Common myeloid progenitor, CD34-positive (primary cell): ENCODE measurements at regions of chr5 and their contacts with region 1.

Region 1: GRCh38 chr5:151115274-151115905 is 34.6 kb upstream of the TNIP1 start:
- DNase-seq: peak; percentile 51 to 75 (median 70)
- H3K4me3 ChIP-seq: no peak overlapping the region
- H3K27ac ChIP-seq: no peak overlapping the region
- H3K4me1 ChIP-seq: no peaks in the 10 kb centered on the region
- H3K27me3 ChIP-seq: no peaks in the 10 kb centered on the region

Region 2: DNA sequence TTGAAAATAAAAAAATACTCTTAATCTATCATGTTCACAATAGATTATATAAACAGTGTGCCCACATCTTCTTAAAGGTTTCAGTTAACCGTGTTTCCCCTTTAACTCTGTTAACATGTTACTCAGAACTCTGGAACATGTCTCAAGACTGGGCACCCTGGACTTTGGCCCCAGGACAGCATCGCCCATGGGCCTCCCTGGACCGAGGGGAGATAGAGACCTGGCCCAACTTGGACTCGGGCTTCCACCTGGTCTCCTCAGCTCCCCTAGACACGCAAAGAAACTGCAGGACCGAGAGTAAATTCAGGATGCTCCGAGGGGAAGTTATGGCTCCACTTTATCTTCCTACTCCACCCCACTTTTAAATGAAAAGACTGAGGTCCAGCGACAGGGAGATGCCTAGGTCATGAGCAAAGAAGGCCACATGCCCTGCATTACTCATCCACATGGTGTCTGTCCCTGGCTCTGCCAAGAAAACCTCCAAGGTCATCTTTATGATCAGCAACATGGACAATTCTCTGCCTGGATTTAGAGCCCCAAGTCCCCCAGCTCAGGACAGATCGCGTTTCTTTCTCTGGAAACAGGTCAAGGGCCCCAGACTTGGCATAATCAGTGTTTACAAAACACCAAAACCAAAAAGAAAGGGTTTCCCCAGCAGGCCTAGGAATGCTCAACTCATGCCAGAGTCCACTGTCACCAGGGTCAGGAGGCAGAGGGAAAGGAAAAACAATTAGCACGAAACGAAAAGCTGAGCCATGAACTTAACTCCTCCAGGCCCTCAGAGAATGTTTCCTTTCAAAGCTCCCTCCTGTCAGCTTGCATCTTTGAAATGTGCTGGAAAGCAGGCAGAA is 77.6 kb before region 1 on chr5:
- CTCF ChIA-PET with region 1: interaction called, 29 read pairs
- POLR2A ChIA-PET with region 1: no interaction called
- DNase-seq: no peak
- H3K4me3 ChIP-seq: no peak overlapping the region
- H3K27ac ChIP-seq: no peak overlapping the region
- H3K4me1 ChIP-seq: no peaks in the 10 kb centered on the region
- H3K27me3 ChIP-seq: no peaks in the 10 kb centered on the region

Region 3: DNA sequence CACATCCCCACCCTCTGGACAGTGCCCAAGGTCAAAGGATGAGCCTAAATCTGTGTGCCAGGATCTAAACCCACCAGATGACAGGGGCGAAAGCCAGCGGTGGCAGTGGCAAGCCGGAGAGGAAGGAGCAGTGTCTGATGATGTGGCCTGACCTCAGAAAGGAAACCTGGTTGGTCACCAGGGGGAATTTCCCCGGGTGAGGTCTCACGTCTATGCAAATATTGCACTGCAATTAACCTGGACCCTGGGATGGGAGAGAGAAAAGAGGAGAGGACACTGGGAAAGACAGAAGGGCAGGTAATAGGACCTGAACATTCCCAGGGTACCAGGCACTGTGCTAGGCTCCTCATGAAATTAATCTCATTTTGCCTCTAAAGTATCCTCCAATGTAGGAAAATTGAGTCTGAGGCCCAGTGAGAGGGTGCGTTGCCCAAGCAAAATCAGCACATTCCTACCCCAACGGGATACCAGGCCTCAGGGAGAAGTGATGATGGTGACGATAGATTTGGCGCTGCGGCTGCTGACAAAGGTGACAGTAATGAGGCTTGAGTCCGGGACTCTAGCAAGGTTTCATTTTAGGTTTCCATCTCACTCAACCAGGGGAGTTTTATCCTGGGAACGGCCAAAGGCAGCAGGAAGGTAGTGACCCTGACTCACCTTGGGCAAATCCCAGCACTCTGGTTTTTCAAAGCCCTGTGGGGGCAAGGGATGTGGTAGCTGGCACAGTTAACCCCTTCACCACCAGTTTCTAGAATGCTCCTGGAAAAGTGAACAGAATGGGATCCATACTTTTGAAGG is 21.1 kb before region 1 on chr5:
- CTCF ChIA-PET with region 1: interaction called, 1,757 read pairs
- POLR2A ChIA-PET with region 1: interaction called, 3 read pairs
- DNase-seq: peak; percentile 56 to 90 (median 89)
- H3K4me3 ChIP-seq: peak overlapping the region in 3 of 7 experiments; percentile 27 to 46 (median 34)
- H3K27ac ChIP-seq: peak overlapping the region in 1 of 2 experiments; percentile 58
- H3K4me1 ChIP-seq: peaks cover 34 to 81% (median 72%) of the 10 kb centered on the region in 4 experiments
- H3K27me3 ChIP-seq: no peaks in the 10 kb centered on the region

Region 4: GRCh38 chr5:151134238-151134637 is 18.8 kb after region 1 on chr5:
- CTCF ChIA-PET with region 1: interaction called, 13 read pairs
- POLR2A ChIA-PET with region 1: no interaction called
- DNase-seq: no peak
- H3K4me3 ChIP-seq: no peak overlapping the region
- H3K27ac ChIP-seq: no peak overlapping the region
- H3K4me1 ChIP-seq: peaks cover 0 to 2% (median 0%) of the 10 kb centered on the region in 4 experiments
- H3K27me3 ChIP-seq: no peaks in the 10 kb centered on the region